ENCODE measurements at regions of chr10 and their contacts with region 1.

Region 1: DNA sequence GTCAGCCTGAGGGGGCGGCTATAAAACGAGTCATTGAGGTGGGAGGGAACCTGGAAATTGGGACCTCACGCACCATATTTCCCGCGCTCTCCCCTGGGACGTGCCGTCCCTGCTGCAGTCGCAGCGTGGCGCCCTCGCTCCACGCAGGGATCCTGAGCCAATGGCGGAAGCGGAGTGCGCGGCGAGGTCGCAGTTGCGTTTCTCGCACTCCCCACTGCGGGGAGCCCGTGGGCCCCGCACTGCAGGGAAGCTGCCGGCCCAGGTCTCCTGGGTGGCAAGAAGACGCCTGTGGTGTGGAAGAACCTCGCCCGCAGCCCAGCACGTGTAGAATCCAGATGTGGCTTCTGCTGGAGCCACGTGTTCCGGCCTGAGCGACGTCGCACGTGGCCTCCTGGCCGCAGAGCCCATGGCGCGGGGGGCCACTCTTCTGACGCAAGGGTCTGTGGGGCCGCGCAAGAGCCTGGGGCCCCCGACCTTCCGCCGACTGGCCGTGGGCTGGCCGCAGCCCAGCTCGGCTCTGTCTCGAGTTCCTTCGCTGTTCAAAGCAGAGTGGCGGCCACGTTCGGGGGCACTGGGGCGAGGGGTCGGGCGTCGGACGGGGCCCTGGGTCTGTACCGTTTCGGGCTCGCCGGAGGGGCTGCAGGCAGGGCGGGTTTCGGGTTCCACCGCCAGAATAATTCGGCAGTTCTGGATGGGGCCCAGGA is 26.4 kb downstream of the HIF1AN start:
- DNase-seq: peak; percentile 52
- H3K4me3 ChIP-seq: no peak overlapping the region
- H3K27ac ChIP-seq: no peak overlapping the region
- H3K4me1 ChIP-seq: peaks cover 9% of the 10 kb centered on the region
- H3K27me3 ChIP-seq: no peaks in the 10 kb centered on the region
- CTCF ChIP-seq: peak; percentile 85 to 91

Region 2: GRCh38 chr10:100728928-100729861 is 167.0 kb after region 1 on chr10:
- CTCF ChIA-PET with region 1: interaction called, 7 read pairs
- dilution Hi-C with region 1: no loop called
- in situ Hi-C with region 1: no loop called
- intact Hi-C with region 1: loop called (anchors 1 kb)
- DNase-seq: no peak
- H3K4me3 ChIP-seq: no peak overlapping the region
- H3K27ac ChIP-seq: no peak overlapping the region
- H3K4me1 ChIP-seq: peaks cover 15% of the 10 kb centered on the region
- H3K27me3 ChIP-seq: peaks cover 46% of the 10 kb centered on the region
- CTCF ChIP-seq: peak; percentile 6 to 33

Region 3: DNA sequence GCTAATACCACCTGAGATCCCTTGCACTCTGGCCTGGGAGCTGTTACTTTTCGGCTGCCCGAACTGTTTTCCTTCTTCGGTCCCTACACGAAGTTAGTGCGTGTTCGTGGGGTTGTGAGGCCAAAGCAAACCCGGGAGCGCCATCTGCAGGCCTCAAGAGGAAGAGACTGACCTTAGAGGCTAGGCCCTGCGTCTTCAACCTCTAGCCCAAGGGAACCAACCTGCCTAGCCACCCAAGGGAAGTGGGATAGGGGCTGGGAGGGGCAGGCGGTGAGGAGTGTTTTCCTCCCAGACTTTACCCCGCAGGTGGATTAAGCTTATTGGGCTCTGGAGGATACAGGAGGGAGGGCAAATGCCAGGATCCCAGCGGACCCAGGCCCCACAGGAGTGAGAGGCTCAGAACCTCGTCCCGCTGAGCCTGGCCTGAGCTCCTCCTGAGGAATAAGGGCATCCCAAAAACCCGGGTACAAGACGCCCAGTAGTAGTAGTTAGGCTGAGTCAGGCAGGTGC is 181.5 kb after region 1 on chr10:
- CTCF ChIA-PET with region 1: no interaction called
- dilution Hi-C with region 1: no loop called
- in situ Hi-C with region 1: loop called in 1 of 2 experiments (anchors 10 kb)
- intact Hi-C with region 1: loop called (anchors 1 kb)
- DNase-seq: peak; percentile 41
- H3K4me3 ChIP-seq: no peak overlapping the region
- H3K27ac ChIP-seq: no peak overlapping the region
- H3K4me1 ChIP-seq: no peaks in the 10 kb centered on the region
- H3K27me3 ChIP-seq: peaks cover 91% of the 10 kb centered on the region
- CTCF ChIP-seq: peak; percentile 63 to 87

Region 4: DNA sequence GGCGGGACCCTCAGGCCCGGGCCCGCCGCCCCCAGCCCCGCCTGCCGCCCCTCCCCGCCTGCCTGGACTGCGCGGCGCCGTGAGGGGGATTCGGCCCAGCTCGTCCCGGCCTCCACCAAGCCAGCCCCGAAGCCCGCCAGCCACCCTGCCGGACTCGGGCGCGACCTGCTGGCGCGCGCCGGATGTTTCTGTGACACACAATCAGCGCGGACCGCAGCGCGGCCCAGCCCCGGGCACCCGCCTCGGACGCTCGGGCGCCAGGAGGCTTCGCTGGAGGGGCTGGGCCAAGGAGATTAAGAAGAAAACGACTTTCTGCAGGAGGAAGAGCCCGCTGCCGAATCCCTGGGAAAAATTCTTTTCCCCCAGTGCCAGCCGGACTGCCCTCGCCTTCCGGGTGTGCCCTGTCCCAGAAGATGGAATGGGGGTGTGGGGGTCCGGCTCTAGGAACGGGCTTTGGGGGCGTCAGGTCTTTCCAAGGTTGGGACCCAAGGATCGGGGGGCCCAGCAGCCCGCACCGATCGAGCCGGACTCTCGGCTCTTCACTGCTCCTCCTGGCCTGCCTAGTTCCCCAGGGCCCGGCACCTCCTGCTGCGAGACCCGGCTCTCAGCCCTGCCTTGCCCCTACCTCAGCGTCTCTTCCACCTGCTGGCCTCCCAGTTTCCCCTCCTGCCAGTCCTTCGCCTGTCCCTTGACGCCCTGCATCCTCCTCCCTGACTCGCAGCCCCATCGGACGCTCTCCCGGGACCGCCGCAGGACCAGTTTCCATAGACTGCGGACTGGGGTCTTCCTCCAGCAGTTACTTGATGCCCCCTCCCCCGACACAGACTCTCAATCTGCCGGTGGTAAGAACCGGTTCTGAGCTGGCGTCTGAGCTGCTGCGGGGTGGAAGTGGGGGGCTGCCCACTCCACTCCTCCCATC is 265.9 kb after region 1 on chr10:
- CTCF ChIA-PET with region 1: no interaction called
- dilution Hi-C with region 1: no loop called
- in situ Hi-C with region 1: no loop called
- intact Hi-C with region 1: loop called (anchors 5 kb)
- DNase-seq: peak; percentile 3
- H3K4me3 ChIP-seq: no peak overlapping the region
- H3K27ac ChIP-seq: no peak overlapping the region
- H3K4me1 ChIP-seq: peaks cover 21% of the 10 kb centered on the region
- H3K27me3 ChIP-seq: peaks cover 56% of the 10 kb centered on the region
- CTCF ChIP-seq: no peak

Region 5: DNA sequence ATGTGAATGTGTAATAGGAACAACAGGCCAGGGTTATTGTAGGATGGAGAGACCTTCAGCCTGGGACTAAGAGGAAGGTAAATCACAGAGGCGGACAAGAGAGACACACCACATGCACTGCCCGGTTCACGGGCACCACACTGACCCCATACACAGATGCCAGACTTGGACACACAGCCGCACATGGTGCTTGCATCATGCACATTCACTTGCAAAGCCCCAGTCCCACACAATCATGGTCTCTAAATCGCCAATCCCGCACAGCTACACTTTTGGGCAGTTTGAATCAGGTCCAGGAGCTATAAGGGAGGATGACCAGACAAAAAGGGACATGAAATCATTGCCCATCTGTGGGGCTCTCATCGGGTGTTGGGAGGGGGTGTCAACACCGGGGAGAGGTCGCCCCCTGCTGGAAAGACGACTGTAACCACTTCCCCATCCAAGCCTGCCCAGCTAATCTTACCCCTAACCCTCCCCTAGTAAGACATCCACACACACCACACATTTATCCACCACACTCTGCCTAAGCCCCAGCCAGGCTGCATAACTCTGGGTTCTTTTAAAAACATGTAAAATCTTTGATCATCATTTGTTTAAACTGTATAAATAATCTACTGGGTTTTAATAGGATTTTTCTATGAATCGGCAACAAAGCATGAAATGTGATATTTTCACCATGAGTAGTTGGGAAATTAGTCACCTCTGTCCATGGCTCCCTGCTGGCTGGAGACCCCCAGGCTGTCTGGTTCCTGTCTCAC is 310.1 kb after region 1 on chr10:
- CTCF ChIA-PET with region 1: interaction called, 5 read pairs
- dilution Hi-C with region 1: no loop called
- in situ Hi-C with region 1: loop called (anchors 10 kb)
- intact Hi-C with region 1: loop called (anchors 1 kb)
- DNase-seq: peak; percentile 20
- H3K4me3 ChIP-seq: no peak overlapping the region
- H3K27ac ChIP-seq: no peak overlapping the region
- H3K4me1 ChIP-seq: no peaks in the 10 kb centered on the region
- H3K27me3 ChIP-seq: no peaks in the 10 kb centered on the region
- CTCF ChIP-seq: peak; percentile 34 to 69

Measured in mammary epithelial cell (primary cell).